Posterior vena cava (tissue), 2 donors: ENCODE measurements at regions of chr19 and their contacts with region 1.

Region 1: DNA sequence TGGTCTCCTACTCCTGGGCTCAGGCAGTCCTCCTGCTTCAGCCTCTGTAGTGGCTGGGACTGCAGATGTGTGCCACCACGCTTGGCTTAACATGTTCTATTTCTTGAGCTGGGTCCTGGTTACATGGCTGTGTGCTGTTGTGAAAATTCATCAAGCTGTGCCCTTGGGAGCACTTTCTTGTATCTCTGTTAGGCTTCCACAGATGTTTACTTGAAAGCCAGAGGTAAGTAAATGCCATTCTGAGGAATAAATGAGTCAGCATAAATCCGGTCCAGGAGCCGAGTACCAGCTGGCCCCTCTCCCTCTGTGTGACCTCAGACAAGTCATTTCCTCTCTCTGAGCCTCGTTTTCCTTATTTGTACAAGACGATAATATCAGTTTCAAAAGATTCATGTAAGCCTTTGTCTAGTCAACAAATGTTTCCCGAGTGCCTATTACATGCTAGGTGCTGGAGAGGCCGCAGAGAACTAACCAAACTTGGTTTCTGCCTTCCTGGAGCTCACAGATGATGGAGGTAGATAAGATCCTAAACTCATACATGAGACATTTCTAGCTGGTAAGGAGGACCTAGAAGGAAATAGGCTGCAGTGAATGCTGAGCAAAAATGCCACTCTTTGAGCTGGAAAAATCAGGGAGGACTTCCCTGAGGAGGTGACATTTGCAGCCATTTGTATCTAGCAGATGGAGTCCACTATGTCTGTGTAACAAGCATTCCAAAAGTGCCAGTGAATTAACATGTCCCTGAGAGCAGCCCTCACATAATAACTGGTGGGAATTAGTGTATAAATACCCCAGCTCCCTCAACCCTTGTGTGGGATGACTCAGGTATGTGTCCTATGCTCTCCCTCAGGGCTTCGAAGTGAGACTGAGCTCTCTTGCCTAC is 2.7 kb upstream of the RASAL3 start:
- DNase-seq: no peak

Region 2: DNA sequence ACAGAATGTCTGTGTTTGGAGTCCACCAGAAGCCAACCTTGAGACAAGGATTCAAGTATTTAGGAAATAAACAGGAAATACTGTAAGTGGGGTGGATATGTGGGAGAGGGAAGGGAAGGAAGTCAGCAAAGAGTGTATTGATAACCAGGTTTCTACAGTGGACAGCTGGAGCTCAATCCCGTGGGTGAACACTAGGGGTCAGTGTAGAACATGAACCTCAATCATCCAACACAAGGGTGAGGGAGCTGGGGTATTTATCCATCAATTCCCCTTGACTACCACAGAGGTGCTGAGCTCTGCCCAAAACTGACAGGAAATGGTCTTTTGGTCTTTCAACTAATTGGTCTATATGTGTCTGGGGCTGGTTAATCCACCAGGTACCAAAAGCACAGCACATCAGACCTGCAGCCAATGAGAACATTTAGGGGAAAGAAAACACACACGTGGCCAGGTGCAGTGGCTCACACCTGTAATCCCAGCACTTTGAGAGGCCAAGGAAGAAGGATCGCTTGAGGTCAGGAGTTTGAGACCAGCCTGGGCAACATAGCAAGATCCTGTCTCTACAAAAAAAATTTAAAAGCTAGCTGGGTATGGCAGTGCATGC is 365.5 kb before region 1 on chr19:
- intact Hi-C with region 1: loop called in 1 of 2 experiments (anchors 5 kb)
- DNase-seq: no peak

Region 3: DNA sequence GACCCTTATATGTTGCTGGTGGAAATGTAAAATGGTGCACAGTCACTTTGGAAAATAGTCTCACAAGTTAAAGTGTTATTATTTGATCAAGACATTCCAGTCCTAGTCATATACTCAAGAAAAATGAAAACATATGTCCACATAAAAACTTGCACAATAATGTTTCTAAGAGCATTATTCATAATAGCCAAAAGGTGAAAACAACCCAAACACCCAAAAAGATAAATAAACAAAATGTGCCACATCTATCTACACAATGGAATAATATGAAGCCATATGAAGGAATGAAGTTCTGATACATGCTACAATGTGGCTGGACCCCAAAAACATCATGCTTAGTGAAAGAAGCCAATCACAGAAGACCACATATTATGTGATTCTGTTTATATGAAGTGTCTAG is 73.1 kb before region 1 on chr19:
- intact Hi-C with region 1: no loop called
- DNase-seq: no peak

Region 4: DNA sequence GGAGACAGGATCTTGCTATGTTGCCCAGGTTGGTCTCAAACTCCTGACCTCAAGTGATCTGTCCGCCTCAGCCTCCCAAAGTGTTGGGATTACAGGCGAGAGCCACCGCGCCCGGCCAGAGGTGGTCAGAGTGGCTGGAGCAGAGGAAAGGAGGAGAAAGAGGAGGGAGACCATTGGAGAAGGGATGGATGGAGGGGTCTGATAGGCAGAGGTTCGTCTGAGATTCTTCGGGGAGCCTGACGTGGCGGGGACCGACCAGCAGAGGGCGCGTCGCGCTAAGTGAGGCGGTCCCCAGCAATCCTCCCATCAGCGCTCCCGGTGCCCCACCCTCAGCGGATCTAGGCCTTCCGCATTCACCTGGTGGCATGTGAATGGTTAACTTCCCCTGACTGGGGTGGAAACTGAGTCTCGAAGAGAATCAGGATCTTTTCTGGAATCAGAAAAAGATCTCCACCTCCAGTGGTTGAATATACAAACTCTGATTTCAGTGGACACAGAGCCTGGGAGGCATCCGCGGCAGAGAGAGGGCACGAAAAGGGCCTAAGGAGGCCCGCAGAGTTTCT is 1879.1 kb after region 1 on chr19:
- intact Hi-C with region 1: no loop called
- DNase-seq: peak; percentile 94